Activated CD4-positive, alpha-beta memory T cell treated with anti-CD3 and anti-CD28 coated beads for 36 hours (primary cell): ENCODE measurements at regions of chr20 and their contacts with region 1.

Region 1: GRCh38 chr20:57383447-57384347 is 7.5 kb upstream of the RBM38 start:
- DNase-seq: no peak
- H3K4me3 Mint-ChIP-seq: no peak overlapping the region
- H3K27ac Mint-ChIP-seq: no peak overlapping the region
- H3K4me1 Mint-ChIP-seq: peaks cover 25% of the 10 kb centered on the region
- H3K27me3 Mint-ChIP-seq: no peaks in the 10 kb centered on the region

Region 2: DNA sequence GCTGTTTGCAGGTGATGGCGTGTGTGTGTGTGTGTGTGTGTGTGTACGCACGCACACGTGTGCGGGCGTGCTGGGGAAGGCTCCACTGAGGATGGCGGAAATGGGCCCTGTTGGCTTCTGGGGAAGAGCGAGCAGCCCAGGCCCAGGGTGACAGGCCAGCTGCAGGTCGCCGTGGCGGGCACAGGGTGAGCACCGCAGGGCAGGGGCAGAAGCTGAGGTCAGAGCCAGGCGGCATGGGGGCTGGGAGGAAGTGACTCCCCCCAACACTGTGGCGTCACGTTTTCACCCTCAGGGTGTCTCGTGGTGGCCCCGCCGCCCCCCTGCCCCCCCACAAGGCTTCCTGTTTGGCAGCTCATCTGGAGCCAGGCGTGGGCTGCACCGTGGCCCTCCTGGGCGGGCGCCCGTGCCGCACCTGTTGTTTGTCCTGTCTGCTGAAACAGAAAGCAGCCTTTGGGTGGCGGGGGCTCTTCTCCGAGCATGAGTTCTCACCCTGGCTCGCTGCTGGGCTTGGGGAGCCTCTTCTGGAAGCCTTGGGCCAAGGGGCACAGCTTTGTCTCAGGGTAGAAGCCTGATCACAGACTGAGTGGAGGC is 14.6 kb after region 1 on chr20:
- CTCF ChIA-PET with region 1: interaction called, 45 read pairs
- POLR2A ChIA-PET with region 1: interaction called, 43 read pairs
- intact Hi-C with region 1: no loop called
- DNase-seq: peak; percentile 93
- H3K4me3 Mint-ChIP-seq: peak overlapping the region; percentile 78
- H3K27ac Mint-ChIP-seq: peak overlapping the region; percentile 96
- H3K4me1 Mint-ChIP-seq: peaks cover 88% of the 10 kb centered on the region
- H3K27me3 Mint-ChIP-seq: no peaks in the 10 kb centered on the region

Region 3: GRCh38 chr20:57493091-57493615 is 109.5 kb after region 1 on chr20:
- CTCF ChIA-PET with region 1: interaction called, 40 read pairs
- POLR2A ChIA-PET with region 1: no interaction called
- intact Hi-C with region 1: loop called (anchors 1 kb)
- DNase-seq: no peak
- H3K4me3 Mint-ChIP-seq: no peak overlapping the region
- H3K27ac Mint-ChIP-seq: no peak overlapping the region
- H3K4me1 Mint-ChIP-seq: peaks cover 4% of the 10 kb centered on the region
- H3K27me3 Mint-ChIP-seq: peaks cover 4% of the 10 kb centered on the region

Region 4: GRCh38 chr20:57498425-57499400 is 115.0 kb after region 1 on chr20:
- CTCF ChIA-PET with region 1: interaction called, 40 read pairs
- POLR2A ChIA-PET with region 1: no interaction called
- intact Hi-C with region 1: loop called (anchors 1 kb)
- DNase-seq: peak; percentile 63
- H3K4me3 Mint-ChIP-seq: no peak overlapping the region
- H3K27ac Mint-ChIP-seq: no peak overlapping the region
- H3K4me1 Mint-ChIP-seq: peaks cover 10% of the 10 kb centered on the region
- H3K27me3 Mint-ChIP-seq: peaks cover 26% of the 10 kb centered on the region